ENCODE measurements at regions of chr7 and their contacts with region 1.

Region 1: DNA sequence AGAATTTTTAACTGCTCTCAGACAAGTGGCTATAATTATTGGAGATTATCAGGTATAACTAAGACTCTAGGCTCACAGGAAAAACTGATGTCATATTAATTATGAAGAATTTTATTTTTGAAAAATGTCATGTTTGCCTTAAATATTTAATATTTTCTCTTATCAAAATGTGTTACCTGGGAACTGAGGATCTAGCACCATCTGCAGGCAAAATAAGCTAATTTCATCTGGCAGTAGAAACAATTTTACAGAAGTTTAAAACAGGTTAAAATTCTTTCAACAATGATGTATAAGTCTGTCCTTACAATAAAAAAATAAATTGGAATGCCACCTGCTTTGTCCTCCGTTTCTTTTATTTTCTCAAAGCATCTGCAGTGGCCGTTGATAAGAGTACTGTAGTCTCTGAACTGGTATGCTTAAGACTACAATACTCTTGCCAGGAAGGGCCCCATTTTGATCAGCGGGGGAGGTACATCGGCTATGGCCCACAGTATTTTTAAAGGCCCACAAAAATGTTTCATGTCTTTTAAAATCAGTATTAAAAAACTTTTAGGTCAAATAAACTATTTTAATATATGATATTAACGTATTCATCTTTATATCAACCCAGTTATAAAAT is 81.3 kb downstream of the VWDE start:
- DNase-seq: peak; percentile 10 to 35
- H3K4me3 ChIP-seq: no peak overlapping the region
- H3K27ac ChIP-seq: no peak overlapping the region
- H3K4me1 ChIP-seq: no peaks in the 10 kb centered on the region
- H3K27me3 ChIP-seq: no peaks in the 10 kb centered on the region
- CTCF ChIP-seq: peak; percentile 20 to 76 (median 57)
- POLR2A ChIP-seq: no peak

Region 2: DNA sequence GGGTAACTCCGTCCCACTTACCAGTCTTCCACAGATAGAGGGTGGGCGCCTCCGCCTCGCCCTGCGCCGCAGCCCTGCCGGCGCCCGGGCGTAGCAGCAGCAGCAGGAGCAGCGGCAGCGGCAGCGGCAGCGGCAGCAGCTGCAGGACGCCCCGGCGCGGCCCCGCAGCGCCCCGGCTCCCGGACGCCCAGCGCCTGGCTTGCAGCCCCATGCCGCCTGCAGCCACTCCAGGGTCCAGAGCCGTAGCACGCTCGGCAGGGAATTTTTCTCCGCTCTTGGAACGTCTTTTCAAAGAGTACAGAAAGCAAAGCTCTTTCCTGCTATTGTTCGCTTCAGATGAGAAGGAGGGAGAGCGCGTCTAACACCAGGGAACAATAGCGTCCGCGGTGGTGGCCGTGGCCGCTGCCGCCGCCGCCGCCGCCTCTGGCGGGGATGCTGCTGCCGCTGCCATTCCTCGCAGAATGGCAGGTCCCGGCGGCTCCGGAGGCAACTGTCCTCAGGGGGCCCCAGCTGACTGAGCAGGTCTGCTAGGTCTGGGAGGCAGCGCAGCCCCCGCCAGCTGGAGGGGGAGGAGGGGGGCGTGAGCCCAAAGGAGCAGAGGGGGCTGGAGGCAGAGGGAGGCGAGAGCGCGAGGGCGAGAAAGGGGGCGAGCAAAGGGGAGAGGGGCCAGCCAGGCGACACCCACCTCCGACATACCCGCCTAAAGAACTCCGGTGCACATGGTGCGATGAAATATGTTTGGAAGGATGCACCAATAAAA is 490.5 kb before region 1 on chr7 and contains the start of gene THSD7A:
- intact Hi-C with region 1: loop called (anchors 10 kb)
- DNase-seq: peak; percentile 54 to 60
- H3K4me3 ChIP-seq: peak within 1 kb of the TSS; percentile 8 to 55 (median 42)
- H3K27ac ChIP-seq: peak within 1 kb of the TSS; percentile 54 to 56 (median 54)
- H3K4me1 ChIP-seq: peaks cover 7 to 8% of the 10 kb centered on the region in 2 donors
- H3K27me3 ChIP-seq: no peaks in the 10 kb centered on the region
- CTCF ChIP-seq: peak in 2 of 6 experiments; percentile 33 to 35
- POLR2A ChIP-seq: peak in 1 of 2 donors; percentile 5
- total RNA-seq, gene THSD7A: 4.2 to 6.1 (median 5.8) TPM

Region 3: DNA sequence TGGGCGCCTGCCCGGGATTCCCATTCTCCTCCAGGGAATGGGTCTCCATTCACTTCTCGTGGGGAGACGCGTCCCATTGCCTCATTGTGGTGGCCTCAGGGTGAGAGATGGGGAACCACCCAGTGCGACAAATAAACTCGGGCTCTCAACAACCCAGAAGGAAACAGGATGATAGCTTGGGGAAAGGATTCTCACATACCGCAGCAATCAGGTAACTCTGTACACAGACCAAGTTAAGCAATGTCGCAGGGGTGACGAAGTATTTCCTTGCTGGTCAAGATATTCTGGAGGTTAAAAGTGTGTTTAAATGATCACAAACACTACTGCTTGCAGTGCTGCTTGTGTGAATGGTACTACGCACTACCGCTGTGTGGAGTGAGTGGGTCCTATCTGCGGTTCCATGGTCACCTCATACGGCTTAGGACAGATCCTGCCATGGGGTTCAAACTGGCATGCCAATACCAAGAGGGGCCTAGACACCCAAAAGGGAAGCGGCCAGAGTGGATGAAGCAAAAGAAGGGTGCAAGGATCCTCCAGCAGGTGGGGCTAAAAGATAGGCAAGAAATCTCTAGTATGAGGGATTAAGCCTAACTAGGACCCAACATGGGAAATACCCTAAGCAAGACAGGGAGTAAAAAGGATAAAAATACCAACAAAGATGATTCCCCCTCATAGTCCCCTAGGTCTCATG is 255.1 kb before region 1 on chr7:
- intact Hi-C with region 1: loop called (anchors 10 kb)
- DNase-seq: peak; percentile 36 to 40
- H3K4me3 ChIP-seq: no peak overlapping the region
- H3K27ac ChIP-seq: no peak overlapping the region
- H3K4me1 ChIP-seq: no peaks in the 10 kb centered on the region
- H3K27me3 ChIP-seq: no peaks in the 10 kb centered on the region
- CTCF ChIP-seq: peak; percentile 14 to 61 (median 46)
- POLR2A ChIP-seq: no peak

Measured in thyroid gland (tissue), 4 donors.